ENCODE measurements at regions of chr12 and their contacts with region 1.

Region 1: DNA sequence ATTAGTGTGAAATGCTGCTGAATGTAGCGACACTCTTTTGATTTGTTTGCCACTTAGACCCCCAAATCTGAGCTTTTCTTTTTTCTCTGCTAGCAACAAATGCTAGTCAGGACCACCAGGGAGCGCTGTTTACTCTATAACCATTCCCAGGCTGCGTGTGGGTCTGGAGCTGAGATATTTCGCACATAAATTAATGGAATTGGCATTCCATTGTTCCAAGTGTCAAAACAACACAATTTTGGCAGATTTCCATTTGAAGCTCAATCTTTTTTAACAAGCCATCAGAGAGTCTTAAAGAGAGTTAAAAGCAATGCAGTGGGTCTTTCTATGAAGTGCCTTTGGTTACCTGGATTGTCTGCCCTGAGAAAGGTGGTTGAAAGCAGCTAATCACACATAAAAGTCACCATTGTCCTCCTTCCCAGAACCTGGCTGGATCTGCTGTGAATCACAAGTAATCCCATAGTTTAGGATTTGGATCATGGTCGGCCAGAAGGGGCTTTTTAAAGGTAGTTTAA is 7.4 kb upstream of the TMEM132C start:
- DNase-seq: no peak
- H3K4me3 ChIP-seq: no peak overlapping the region
- H3K27ac ChIP-seq: no peak overlapping the region
- H3K4me1 ChIP-seq: no peaks in the 10 kb centered on the region
- H3K27me3 ChIP-seq: no peaks in the 10 kb centered on the region
- CTCF ChIP-seq: no peak

Region 2: DNA sequence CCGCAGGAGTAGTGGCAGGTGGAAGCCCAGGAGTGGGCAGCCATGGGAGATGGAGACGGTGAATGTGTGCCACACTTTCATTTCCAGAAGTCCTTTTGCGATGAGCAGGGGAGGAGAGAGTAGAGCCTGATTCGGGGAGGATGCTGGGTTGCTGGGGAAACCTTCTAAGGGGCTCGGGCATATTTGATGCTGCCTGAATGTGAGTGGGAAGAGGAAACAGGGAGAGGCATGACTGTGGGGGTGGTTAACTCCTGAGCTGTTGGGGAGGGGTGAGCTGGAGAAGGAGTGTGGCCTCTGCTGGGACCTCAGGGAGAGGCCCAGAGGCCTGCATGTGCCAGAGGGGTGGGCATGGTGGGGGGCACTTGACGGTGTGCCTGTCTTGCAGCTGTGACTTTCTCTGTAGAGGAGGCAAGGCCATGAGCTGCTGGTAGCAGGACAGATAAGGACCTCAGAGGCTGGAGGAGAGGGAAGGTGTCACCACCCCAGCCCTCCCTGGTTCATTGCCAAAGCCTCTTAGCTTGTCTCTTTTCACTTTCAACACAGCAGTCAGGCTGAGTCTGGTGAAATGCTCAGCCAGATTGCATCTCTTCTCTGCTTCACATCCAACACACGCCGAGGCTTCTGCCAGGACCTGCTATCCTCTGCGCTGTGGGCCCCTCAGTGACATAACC is 605.0 kb after region 1 on chr12:
- intact Hi-C with region 1: no loop called
- DNase-seq: no peak
- H3K4me3 ChIP-seq: no peak overlapping the region
- H3K27ac ChIP-seq: no peak overlapping the region
- H3K4me1 ChIP-seq: no peaks in the 10 kb centered on the region
- H3K27me3 ChIP-seq: no peaks in the 10 kb centered on the region
- CTCF ChIP-seq: no peak

Region 3: DNA sequence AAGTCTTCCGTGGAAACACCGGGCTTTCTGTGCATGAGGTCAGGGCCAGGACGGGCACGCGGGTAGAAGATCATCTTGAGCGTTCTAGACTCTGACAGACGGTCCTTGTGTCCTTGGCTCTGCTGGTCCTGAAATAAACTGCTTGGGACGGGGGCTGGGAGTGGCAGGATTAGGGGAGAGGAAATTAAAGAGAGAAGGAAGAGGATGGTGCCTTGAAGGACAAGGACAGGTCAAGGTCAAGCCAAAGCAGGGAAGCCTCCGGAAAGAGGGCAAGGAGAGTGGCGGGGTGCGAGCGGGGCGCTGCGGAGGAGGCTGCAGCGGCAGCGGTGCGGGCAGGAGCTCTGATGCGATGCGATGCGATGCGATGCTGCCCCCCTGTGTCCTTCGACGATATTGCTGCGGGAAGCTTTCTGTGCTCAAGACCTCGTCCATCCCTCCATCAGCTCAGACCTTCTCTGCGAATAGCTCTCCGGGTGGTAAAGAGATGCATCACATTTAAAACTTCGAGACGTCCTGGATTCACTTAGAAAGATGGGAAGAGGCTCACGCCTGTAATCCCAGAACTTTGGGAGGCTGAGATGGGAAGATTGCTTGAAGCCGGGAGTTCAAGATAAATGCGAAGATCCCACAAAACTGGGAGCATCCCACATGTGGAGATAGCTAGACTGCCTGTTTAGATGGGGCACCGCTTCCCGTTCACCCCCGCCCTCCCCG is 1754.3 kb after region 1 on chr12:
- intact Hi-C with region 1: loop called (anchors 10 kb)
- DNase-seq: peak; percentile 45
- H3K4me3 ChIP-seq: no peak overlapping the region
- H3K27ac ChIP-seq: no peak overlapping the region
- H3K4me1 ChIP-seq: no peaks in the 10 kb centered on the region
- H3K27me3 ChIP-seq: no peaks in the 10 kb centered on the region
- CTCF ChIP-seq: peak; percentile 48

Measured in colonic mucosa (tissue), 4 donors.